B cell (primary cell): ENCODE measurements at regions of chr19 and their contacts with region 1.

Region 1: GRCh38 chr19:56314562-56315077 is at the start of gene ZSCAN5A:
- DNase-seq: peak; percentile 99
- ATAC-seq: peak; percentile 77
- H3K4me3 ChIP-seq: peak within 1 kb of the TSS; percentile 67 to 84 (median 80)
- H3K4me3 Mint-ChIP-seq: peak within 1 kb of the TSS; percentile 95
- H3K27ac ChIP-seq: peak within 1 kb of the TSS; percentile 95 to 99
- H3K27ac Mint-ChIP-seq: peak within 1 kb of the TSS; percentile 94
- H3K4me1 ChIP-seq: peaks cover 12 to 13% of the 10 kb centered on the region in 2 donors
- H3K4me1 Mint-ChIP-seq: peaks cover 17% of the 10 kb centered on the region
- H3K27me3 ChIP-seq: no peaks in the 10 kb centered on the region
- H3K27me3 Mint-ChIP-seq: no peaks in the 10 kb centered on the region
- CTCF ChIP-seq: no peak
- total RNA-seq, gene ZSCAN5A: 20.5 and 24.8 TPM in 2 replicates

Region 2: DNA sequence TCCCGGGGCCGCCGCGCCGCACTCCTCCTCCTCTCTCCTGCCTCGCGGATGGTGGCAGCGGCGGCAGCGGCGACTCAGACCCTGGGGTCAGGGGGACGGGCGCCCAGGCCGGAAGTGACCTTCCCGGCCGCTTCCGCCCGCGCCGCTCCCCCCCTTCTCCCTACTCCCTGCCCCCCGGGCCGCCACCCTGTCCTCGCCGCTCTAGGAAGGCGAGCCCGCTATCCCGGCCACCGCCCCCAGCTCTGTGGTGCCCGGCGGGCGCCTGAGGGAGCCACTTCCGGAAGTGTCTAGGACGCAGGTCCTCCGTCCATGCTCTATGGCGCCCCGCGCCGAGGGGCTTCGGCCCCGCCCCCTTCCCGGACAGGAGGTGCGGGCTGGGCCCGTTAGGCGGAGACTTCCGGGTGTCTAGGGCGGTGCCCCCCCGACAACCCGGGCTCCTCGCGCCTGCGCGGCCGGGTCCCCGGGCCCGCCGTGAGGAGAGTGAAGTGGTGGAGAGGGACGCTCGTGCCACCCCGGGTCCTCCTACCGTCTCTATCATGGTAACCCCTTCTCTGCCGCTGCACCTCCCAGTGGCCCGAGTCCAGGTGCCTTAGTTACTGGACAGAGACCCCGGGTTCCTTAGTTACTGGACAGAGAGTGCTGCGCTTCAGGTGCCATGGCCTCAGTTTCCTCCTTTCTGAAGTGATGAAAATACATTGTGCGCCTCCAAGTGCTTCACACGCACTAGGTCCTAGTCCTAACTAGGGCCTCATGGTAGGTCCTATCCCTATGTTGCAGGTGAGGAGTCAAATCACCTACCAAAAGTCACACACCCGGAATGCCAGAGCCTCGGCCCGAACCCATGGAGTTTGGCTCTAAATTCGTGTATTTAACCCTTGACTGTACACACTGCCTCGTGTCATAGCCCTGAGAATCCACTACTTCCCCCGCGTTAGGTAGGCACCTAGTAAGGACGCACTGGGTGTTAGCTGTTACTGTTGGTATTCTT is 193.1 kb before region 1 on chr19 and contains the start of gene ZNF787:
- CTCF ChIA-PET with region 1: no interaction called
- POLR2A ChIA-PET with region 1: interaction called, 7 read pairs
- intact Hi-C with region 1: loop called (anchors 1 kb)
- DNase-seq: peak; percentile 98
- ATAC-seq: peak; percentile 83
- H3K4me3 ChIP-seq: peak within 1 kb of the TSS; percentile 37 to 95 (median 76)
- H3K4me3 Mint-ChIP-seq: peak within 1 kb of the TSS; percentile 94
- H3K27ac ChIP-seq: peak within 1 kb of the TSS; percentile 91 to 99
- H3K27ac Mint-ChIP-seq: peak within 1 kb of the TSS; percentile 99
- H3K4me1 ChIP-seq: peaks cover 18 to 29% of the 10 kb centered on the region in 2 donors
- H3K4me1 Mint-ChIP-seq: peaks cover 40% of the 10 kb centered on the region
- H3K27me3 ChIP-seq: no peaks in the 10 kb centered on the region
- H3K27me3 Mint-ChIP-seq: no peaks in the 10 kb centered on the region
- CTCF ChIP-seq: no peak
- total RNA-seq, gene ZNF787: 47.7 and 47.9 TPM in 2 replicates

Region 3: DNA sequence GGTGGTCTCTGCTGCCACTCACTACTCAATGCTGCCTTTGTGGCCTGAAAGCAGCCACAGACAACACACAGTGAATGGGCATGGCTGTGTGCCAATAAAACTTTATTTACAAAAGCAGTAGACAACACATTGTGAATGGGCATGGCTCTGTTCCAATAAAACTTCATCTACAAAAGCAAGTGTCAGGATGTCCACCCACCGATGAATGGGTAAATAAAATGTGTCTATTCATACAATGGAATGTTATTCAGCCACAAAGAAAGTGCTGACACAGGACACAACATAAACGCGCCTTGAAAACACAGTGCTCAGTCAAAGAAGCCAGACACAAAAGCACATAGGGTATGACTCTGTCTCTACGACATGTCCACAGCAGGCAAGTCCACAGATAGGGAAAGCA is 20.1 kb before region 1 on chr19:
- CTCF ChIA-PET with region 1: no interaction called
- POLR2A ChIA-PET with region 1: no interaction called
- intact Hi-C with region 1: no loop called
- DNase-seq: no peak
- ATAC-seq: no peak
- H3K4me3 ChIP-seq: no peak overlapping the region
- H3K4me3 Mint-ChIP-seq: no peak overlapping the region
- H3K27ac ChIP-seq: no peak overlapping the region
- H3K27ac Mint-ChIP-seq: no peak overlapping the region
- H3K4me1 ChIP-seq: no peaks in the 10 kb centered on the region
- H3K4me1 Mint-ChIP-seq: no peaks in the 10 kb centered on the region
- H3K27me3 ChIP-seq: no peaks in the 10 kb centered on the region
- H3K27me3 Mint-ChIP-seq: no peaks in the 10 kb centered on the region
- CTCF ChIP-seq: no peak

Region 4: GRCh38 chr19:56356944-56357343 is 42.3 kb after region 1 on chr19:
- CTCF ChIA-PET with region 1: no interaction called
- POLR2A ChIA-PET with region 1: no interaction called
- intact Hi-C with region 1: no loop called
- DNase-seq: no peak
- ATAC-seq: no peak
- H3K4me3 ChIP-seq: no peak overlapping the region
- H3K4me3 Mint-ChIP-seq: no peak overlapping the region
- H3K27ac ChIP-seq: no peak overlapping the region
- H3K27ac Mint-ChIP-seq: no peak overlapping the region
- H3K4me1 ChIP-seq: no peaks in the 10 kb centered on the region
- H3K4me1 Mint-ChIP-seq: no peaks in the 10 kb centered on the region
- H3K27me3 ChIP-seq: no peaks in the 10 kb centered on the region
- H3K27me3 Mint-ChIP-seq: no peaks in the 10 kb centered on the region
- CTCF ChIP-seq: no peak

Region 5: DNA sequence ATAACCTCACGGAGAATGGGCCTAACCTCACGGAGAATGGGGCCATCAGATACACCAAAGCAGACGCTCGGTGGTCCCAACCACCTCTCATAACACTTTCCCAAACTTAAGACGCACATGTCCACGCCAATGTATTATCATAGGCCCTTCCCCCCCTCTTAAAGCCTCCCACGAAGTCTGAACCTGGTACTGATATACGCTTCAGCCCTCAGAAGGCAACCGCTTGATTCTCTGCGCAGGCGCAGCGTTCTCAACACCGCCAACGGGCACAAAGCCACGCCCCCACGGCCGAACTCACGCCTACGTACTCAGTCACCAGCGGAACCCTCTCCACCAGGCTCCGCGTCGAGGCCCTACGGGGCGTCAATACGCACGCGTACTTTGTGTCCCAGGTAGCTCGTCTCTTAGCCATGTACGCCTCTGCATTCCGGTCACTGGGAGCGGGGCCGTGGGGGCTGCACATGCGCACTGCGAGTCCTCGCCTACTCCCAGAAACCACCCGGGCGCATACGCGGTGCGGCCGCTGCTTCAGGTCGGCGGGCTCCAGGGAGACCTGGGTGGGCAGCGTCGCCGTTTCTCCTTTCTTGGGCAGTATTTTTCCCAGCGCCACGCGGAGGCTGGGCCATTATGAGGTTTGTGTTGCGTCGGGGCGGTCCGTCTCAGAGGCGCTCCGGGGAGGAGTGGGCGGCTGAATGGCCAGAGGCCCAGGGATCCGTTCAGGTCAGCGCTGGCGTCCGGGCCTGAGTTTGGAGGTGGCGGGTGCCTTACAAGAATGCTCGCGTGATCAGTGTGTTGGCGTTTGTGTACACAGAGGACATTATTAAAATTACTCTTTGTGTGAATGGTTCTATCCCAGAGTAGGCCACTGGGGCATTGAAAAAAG is 53.5 kb after region 1 on chr19:
- CTCF ChIA-PET with region 1: no interaction called
- POLR2A ChIA-PET with region 1: interaction called, 3 read pairs
- intact Hi-C with region 1: loop called (anchors 2 kb)
- DNase-seq: peak; percentile 93
- ATAC-seq: peak; percentile 99
- H3K4me3 ChIP-seq: peak overlapping the region; percentile 45 to 85 (median 77)
- H3K4me3 Mint-ChIP-seq: peak overlapping the region; percentile 96
- H3K27ac ChIP-seq: peak overlapping the region; percentile 78 to 79
- H3K27ac Mint-ChIP-seq: peak overlapping the region; percentile 90
- H3K4me1 ChIP-seq: peaks cover 8 to 14% of the 10 kb centered on the region in 2 donors
- H3K4me1 Mint-ChIP-seq: peaks cover 25% of the 10 kb centered on the region
- H3K27me3 ChIP-seq: no peaks in the 10 kb centered on the region
- H3K27me3 Mint-ChIP-seq: no peaks in the 10 kb centered on the region
- CTCF ChIP-seq: no peak